ENCODE measurements at regions of chr3 and their contacts with region 1.

Region 1: DNA sequence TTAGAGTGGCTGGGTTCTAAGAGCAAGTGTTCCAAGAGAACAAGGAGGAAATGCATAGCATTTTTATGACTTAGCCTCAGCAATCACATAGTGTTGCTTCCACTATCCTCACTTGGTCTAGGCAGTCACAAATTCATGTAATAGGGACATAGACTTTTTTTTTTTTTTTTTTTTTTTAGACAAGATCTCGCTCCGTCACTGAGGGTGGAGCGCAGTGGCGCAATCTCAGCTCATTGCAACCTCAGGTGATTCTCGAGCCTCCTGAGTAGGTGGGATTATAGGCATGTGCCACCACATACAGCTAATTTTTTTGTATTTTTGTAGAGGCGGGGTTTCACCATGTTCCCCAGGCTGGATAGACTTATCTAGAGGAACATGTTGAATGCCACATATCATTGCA is 4.7 kb upstream of the GNB4 start:
- DNase-seq: no peak
- H3K4me3 ChIP-seq: no peak overlapping the region
- H3K27ac ChIP-seq: no peak overlapping the region
- H3K4me1 ChIP-seq: peaks cover 22% of the 10 kb centered on the region
- H3K27me3 ChIP-seq: no peaks in the 10 kb centered on the region
- CTCF ChIP-seq: no peak

Region 2: GRCh38 chr3:179531576-179531975 is 75.6 kb after region 1 on chr3:
- CTCF ChIA-PET with region 1: no interaction called
- POLR2A ChIA-PET with region 1: interaction called, 16 read pairs
- intact Hi-C with region 1: no loop called
- DNase-seq: no peak
- H3K4me3 ChIP-seq: no peak overlapping the region
- H3K27ac ChIP-seq: no peak overlapping the region
- H3K4me1 ChIP-seq: peaks cover 10% of the 10 kb centered on the region
- H3K27me3 ChIP-seq: no peaks in the 10 kb centered on the region
- CTCF ChIP-seq: no peak